Endothelial cell of umbilical vein (primary cell): ENCODE measurements at regions of chr6 and their contacts with region 1.

Region 1: DNA sequence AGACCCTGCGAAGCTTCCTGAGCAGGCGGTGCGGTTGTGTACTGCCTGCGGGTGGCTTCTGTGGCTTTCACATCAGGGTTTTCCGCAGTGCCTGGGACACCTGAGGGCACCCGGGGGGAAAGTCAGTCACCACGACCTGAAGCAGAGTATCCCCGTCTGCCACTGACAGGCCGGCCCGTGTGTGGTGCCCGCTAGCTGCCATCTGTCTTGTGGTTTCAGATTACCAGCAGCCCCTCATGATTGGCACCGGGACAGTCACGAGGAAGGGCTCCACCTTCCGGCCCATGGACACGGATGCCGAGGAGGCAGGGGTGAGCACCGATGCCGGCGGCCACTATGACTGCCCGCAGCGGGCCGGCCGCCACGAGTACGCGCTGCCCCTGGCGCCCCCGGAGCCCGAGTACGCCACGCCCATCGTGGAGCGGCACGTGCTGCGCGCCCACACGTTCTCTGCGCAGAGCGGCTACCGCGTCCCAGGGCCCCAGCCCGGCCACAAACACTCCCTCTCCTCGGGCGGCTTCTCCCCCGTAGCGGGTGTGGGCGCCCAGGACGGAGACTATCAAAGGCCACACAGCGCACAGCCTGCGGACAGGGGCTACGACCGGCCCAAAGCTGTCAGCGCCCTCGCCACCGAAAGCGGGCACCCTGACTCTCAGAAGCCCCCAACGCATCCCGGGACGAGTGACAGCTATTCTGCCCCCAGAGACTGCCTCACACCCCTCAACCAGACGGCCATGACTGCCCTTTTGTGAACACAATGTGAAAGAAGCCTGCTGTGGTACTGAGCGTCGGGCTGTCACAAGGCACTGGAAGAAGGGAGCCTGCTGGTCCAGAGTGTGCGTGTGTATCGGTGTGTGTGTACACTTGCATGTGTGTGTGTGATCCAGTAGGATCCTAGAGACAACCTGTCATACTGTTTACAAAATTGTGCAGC is 54.4 kb downstream of the GOPC start:
- DNase-seq: peak; percentile 64
- H3K4me3 ChIP-seq: peak overlapping the region in 2 of 3 experiments; percentile 8 to 24
- H3K27ac ChIP-seq: peak overlapping the region; percentile 75
- H3K4me1 ChIP-seq: peaks cover 35% of the 10 kb centered on the region
- H3K27me3 ChIP-seq: no peaks in the 10 kb centered on the region
- CTCF ChIP-seq: peak in 1 of 2 donors; percentile 7
- POLR2A ChIP-seq: no peak

Region 2: DNA sequence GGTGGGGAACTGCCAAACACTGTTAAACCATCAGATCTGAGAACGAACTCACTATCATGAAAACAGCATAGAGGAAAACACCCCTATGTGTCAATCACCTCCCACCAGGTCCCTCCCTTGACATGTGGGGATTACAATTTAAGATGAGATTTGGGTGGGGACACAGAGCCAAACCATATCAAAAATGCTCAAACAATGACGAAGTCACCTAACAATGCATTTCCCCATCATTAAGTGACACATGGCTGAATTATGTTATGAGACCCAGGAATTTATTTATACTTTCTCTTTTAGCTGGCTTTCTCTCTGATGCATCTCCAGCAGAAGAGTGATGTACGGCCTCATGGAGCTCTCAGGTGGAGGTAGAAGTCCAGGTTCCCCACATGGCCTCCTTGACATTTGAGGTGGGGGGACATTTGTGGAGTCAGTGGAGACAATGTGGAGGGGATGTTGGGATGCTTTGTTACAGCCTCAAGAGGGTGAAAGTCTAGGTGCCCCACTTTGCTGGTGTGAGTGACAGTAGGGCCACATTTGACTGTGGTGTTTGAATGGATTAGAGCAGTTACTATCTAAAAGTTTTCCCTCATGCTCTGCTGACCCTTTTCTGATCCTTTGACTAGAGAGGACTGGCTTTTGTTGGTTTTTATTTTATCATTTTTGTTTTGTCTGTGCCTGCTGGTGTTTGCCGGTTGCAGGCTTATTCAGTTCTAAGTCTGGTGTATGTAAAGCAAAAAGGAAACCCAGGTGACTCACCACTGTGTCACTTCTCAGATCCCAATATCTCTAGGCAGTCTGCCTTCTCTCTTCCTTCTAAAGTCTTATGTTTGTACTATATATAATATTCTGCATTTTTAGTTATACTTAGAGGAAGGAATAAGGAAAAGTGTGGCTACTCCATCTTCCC is 83.9 kb before region 1 on chr6:
- CTCF ChIA-PET with region 1: no interaction called
- POLR2A ChIA-PET with region 1: no interaction called
- dilution Hi-C with region 1: no loop called
- intact Hi-C with region 1: loop called (anchors 1 kb)
- DNase-seq: peak; percentile 69
- H3K4me3 ChIP-seq: peak overlapping the region in 1 of 3 experiments; percentile 1
- H3K27ac ChIP-seq: peak overlapping the region; percentile 81
- H3K4me1 ChIP-seq: peaks cover 25% of the 10 kb centered on the region
- H3K27me3 ChIP-seq: no peaks in the 10 kb centered on the region
- CTCF ChIP-seq: no peak
- POLR2A ChIP-seq: no peak

Region 3: GRCh38 chr6:117482240-117483003 is 65.5 kb before region 1 on chr6 and contains the start of gene DCBLD1:
- CTCF ChIA-PET with region 1: interaction called, 18 read pairs
- POLR2A ChIA-PET with region 1: interaction called, 8 read pairs
- dilution Hi-C with region 1: no loop called
- intact Hi-C with region 1: loop called (anchors 1 kb)
- DNase-seq: peak; percentile 78
- H3K4me3 ChIP-seq: peak within 1 kb of the TSS; percentile 53 to 94 (median 92)
- H3K27ac ChIP-seq: peak within 1 kb of the TSS; percentile 92
- H3K4me1 ChIP-seq: peaks cover 28% of the 10 kb centered on the region
- H3K27me3 ChIP-seq: no peaks in the 10 kb centered on the region
- CTCF ChIP-seq: peak in 1 of 2 donors; percentile 12
- POLR2A ChIP-seq: peak; percentile 78
- total RNA-seq, gene DCBLD1: 44.3 and 55.8 TPM in 2 replicates

Region 4: DNA sequence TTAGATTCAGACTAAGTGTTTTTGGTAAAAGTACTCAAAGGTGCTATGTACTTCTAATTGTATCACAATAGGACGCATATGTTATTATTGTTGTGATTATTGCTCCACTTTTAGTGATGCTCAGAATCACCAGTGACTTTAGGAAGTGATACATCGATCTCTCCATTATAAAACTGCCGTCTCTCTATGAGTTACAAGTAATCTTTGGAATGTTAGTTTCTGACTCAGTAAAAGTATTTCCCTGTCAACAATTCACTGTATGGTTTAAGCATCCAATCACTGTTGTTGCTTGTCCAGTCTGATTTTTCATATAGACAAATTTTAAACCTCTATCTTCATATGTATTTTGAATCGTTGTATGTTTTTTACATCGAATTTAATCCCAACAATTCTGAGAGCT is 56.0 kb before region 1 on chr6:
- CTCF ChIA-PET with region 1: interaction called, 7 read pairs
- POLR2A ChIA-PET with region 1: interaction called, 3 read pairs
- dilution Hi-C with region 1: no loop called
- intact Hi-C with region 1: loop called (anchors 1 kb)
- DNase-seq: peak; percentile 87
- H3K4me3 ChIP-seq: peak overlapping the region in 1 of 3 experiments; percentile 18
- H3K27ac ChIP-seq: peak overlapping the region; percentile 99
- H3K4me1 ChIP-seq: peaks cover 64% of the 10 kb centered on the region
- H3K27me3 ChIP-seq: no peaks in the 10 kb centered on the region
- CTCF ChIP-seq: no peak
- POLR2A ChIP-seq: peak; percentile 31

Region 5: DNA sequence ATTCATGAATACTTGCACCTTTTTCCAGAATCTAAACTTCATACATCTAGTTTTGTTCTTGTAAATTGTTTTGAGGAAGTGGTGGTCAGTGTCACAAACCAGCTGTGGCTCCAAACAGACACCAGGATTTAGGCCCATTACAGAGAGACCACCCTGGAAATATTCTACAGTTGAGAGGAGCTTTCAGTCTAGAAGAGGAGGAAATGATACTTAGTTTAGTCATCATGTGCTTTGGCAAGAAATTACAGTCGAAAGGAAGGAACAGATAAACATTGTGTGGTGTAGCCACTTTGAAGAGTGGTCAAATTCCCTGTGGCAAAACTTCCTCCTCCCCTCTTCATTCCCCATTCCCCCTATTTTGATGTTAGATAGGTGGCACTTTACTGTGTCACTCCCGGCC is 49.8 kb before region 1 on chr6:
- CTCF ChIA-PET with region 1: interaction called, 3 read pairs
- POLR2A ChIA-PET with region 1: interaction called, 3 read pairs
- dilution Hi-C with region 1: no loop called
- intact Hi-C with region 1: loop called (anchors 1 kb)
- DNase-seq: peak; percentile 88
- H3K4me3 ChIP-seq: no peak overlapping the region
- H3K27ac ChIP-seq: peak overlapping the region; percentile 99
- H3K4me1 ChIP-seq: peaks cover 74% of the 10 kb centered on the region
- H3K27me3 ChIP-seq: no peaks in the 10 kb centered on the region
- CTCF ChIP-seq: no peak
- POLR2A ChIP-seq: peak; percentile 51

Region 6: GRCh38 chr6:117536317-117536716 is 11.6 kb before region 1 on chr6:
- CTCF ChIA-PET with region 1: interaction called, 5 read pairs
- POLR2A ChIA-PET with region 1: no interaction called
- dilution Hi-C with region 1: no loop called
- intact Hi-C with region 1: loop called (anchors 1 kb)
- DNase-seq: no peak
- H3K4me3 ChIP-seq: no peak overlapping the region
- H3K27ac ChIP-seq: no peak overlapping the region
- H3K4me1 ChIP-seq: peaks cover 17% of the 10 kb centered on the region
- H3K27me3 ChIP-seq: no peaks in the 10 kb centered on the region
- CTCF ChIP-seq: no peak
- POLR2A ChIP-seq: no peak

Region 7: GRCh38 chr6:117674991-117675657 is 127.2 kb after region 1 on chr6 and contains the start of gene NUS1:
- CTCF ChIA-PET with region 1: no interaction called
- POLR2A ChIA-PET with region 1: no interaction called
- dilution Hi-C with region 1: no loop called
- intact Hi-C with region 1: loop called (anchors 1 kb)
- DNase-seq: peak; percentile 97
- H3K4me3 ChIP-seq: peak within 1 kb of the TSS; percentile 33 to 82 (median 75)
- H3K27ac ChIP-seq: peak within 1 kb of the TSS; percentile 52
- H3K4me1 ChIP-seq: peaks cover 21% of the 10 kb centered on the region
- H3K27me3 ChIP-seq: no peaks in the 10 kb centered on the region
- CTCF ChIP-seq: peak; percentile 86 to 88
- POLR2A ChIP-seq: no peak
- total RNA-seq, gene NUS1: 33.4 and 34.3 TPM in 2 replicates